ENCODE measurements at regions of chr22 and their contacts with region 1.

Region 1: GRCh38 chr22:23385291-23386244 is 194.5 kb downstream of the IGLL1 start:
- DNase-seq: peak; percentile 61
- H3K4me3 ChIP-seq: no peak overlapping the region
- H3K27ac ChIP-seq: no peak overlapping the region
- H3K27me3 ChIP-seq: no peaks in the 10 kb centered on the region
- CTCF ChIP-seq: peak; percentile 97

Region 2: GRCh38 chr22:23178512-23179254 is 206.9 kb before region 1 on chr22:
- CTCF ChIA-PET with region 1: interaction called, 12 read pairs
- POLR2A ChIA-PET with region 1: no interaction called
- DNase-seq: no peak
- H3K4me3 ChIP-seq: no peak overlapping the region
- H3K27ac ChIP-seq: peak overlapping the region; percentile 11
- H3K27me3 ChIP-seq: no peaks in the 10 kb centered on the region
- CTCF ChIP-seq: peak; percentile 99

Region 3: GRCh38 chr22:23219822-23220484 is 165.6 kb before region 1 on chr22:
- CTCF ChIA-PET with region 1: no interaction called
- POLR2A ChIA-PET with region 1: no interaction called
- DNase-seq: no peak
- H3K4me3 ChIP-seq: no peak overlapping the region
- H3K27ac ChIP-seq: no peak overlapping the region
- H3K27me3 ChIP-seq: no peaks in the 10 kb centered on the region
- CTCF ChIP-seq: no peak

Region 4: DNA sequence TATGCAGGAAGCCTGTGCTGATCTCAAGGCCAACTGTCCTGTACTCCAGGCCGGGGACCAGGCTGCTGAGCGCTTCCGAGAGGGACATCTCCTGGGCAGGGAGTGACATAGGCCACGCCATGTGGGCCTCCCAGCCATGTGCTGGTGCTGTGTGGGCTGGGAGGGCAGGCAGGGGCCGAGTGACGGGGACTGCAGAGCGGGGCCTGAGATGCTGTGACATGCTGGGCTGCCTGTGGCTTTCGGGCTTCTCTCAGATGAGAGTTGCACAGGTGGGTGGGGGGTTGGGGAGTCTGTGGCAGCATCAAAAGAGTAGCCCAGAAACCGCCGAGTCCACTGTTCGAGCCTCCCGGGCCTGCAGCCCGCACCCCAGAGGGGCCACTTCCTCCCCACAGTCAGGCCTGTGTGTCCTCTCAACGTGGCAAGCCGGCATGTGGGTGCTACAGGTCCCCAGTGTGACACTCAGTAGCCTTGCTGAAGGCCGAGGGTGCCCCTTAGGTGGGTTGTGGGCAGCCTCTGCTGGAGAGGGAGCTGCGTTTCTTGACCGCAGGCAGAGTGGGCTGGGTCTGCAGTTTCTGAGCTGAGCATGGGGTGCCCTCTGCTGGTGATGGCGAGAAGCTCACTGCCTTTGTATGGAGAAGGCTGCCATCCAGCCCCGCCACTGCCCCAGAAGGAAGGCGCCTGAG is 104.0 kb before region 1 on chr22:
- CTCF ChIA-PET with region 1: interaction called, 10 read pairs
- POLR2A ChIA-PET with region 1: no interaction called
- DNase-seq: peak; percentile 50
- H3K4me3 ChIP-seq: no peak overlapping the region
- H3K27ac ChIP-seq: peak overlapping the region; percentile 52
- H3K27me3 ChIP-seq: no peaks in the 10 kb centered on the region
- CTCF ChIP-seq: peak; percentile 90

Region 5: DNA sequence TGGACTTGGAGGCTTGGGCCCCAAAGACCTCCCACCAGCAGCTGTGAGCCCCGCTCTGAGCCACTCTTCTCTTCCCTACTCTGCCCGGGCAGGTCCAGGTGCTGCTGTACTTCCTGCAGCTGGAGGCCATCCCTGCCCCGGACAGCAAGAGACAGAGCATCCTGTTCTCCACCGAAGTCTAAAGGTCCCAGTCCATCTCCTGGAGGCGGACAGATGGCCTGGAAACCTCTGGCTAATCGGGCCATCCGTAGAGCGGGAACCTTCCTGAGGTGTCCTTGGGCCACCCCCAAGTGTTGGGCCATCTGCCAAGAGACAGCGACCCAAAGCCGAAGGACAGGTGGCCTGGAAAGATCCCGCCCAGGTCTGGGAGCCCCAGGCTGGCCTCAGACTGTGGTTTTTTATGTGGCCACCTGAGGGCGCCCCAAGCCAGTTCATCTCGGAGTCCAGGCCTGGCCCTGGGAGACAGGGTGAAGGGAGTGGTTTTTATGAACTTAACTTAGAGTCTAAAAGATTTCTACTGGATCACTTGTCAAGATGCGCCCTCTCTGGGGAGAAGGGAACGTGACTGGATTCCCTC is 70.1 kb before region 1 on chr22:
- CTCF ChIA-PET with region 1: interaction called, 11 read pairs
- POLR2A ChIA-PET with region 1: no interaction called
- DNase-seq: no peak
- H3K4me3 ChIP-seq: no peak overlapping the region
- H3K27ac ChIP-seq: no peak overlapping the region
- H3K27me3 ChIP-seq: no peaks in the 10 kb centered on the region
- CTCF ChIP-seq: peak; percentile 61

Region 6: DNA sequence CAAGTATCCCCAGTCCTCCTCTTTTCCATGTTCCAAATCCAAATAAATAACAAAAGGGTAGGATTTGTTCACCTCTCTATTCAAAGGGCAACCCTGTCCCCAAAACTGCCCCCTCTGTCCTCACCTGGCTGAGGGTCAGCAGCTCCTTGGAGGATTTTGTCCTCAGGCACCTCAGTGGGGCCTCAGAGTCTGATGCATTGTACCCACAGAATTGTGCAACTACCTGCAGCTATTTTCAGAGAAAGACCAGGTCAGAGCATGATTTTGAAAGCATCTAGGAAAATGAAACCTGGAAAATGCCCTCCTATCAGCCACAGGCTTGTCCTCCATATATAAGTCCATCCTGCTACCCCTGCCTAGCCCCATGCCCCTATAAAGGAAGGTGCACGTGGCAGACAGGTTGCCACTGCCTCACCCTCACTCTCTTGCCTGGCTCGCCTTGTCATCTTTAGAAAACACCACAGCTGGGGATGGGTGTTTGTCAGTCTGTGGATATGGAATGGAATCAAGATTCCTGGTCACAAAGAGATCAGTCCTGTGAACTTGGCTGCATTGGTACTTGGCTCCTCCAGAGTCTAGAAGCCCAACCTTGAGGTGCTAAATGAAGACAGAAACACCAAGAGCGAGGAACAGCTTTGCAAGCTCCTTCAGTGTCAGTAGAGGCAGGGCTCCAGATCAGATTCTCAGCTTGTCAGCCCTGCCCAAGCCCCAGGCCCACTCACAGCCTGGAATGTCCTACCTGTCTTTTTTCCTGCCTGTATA is 16.7 kb before region 1 on chr22:
- CTCF ChIA-PET with region 1: interaction called, 17 read pairs
- POLR2A ChIA-PET with region 1: no interaction called
- DNase-seq: no peak
- H3K4me3 ChIP-seq: no peak overlapping the region
- H3K27ac ChIP-seq: no peak overlapping the region
- H3K27me3 ChIP-seq: peaks cover 21% of the 10 kb centered on the region
- CTCF ChIP-seq: no peak

Region 7: DNA sequence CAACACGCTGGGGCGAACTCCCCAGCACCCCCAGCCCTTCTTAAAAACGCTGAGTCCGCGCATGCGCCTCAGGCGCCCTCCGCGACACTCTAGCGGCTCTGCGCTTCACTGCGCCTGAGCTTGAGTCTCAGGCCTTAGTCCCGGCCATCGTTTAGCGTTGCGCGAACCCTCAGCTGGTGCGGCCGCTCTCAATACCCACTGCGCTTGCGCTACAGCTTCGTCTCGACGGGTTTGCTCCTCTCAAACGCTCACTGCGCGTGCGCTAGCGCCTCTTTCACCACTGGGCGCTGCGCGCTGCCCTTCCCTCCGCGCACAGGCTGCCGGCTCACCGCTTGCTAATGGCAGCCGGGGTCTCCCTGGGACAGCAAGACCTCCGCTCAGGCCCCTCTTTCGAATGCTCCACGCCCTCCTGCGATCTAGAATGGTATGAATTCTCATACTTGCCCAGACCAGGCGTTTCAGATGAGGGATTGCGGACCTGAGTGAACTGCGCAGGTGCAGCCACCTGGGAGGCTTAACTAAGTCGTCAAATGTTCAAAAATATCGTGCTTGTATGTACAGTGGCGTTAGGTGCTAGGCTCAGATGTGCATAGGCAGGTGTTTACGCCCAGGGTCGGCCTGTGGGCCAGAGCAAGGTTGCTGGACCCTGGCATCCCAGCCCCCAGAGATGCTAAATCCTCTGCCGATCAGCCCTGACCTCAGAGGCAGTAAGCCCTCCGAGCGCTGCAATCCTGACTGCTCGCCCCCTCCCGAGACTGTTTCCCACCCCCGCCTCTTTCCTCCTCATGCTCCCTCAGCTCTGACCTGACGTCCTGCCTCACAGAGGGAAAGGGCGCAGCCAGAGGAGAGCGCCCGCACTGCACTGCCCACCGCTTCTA is 472.3 kb after region 1 on chr22 and contains the start of gene SLC2A11:
- CTCF ChIA-PET with region 1: no interaction called
- POLR2A ChIA-PET with region 1: no interaction called
- DNase-seq: peak; percentile 92
- H3K4me3 ChIP-seq: peak within 1 kb of the TSS; percentile 87
- H3K27ac ChIP-seq: peak within 1 kb of the TSS; percentile 57
- H3K27me3 ChIP-seq: no peaks in the 10 kb centered on the region
- CTCF ChIP-seq: no peak; the same call in none of the 2 replicates
- polyA plus RNA-seq, gene SLC2A11: 7.2 and 7.5 TPM in 2 replicates